Psoas muscle (tissue), 8 donors: ENCODE measurements at regions of chr10 and their contacts with region 1.

Region 1: DNA sequence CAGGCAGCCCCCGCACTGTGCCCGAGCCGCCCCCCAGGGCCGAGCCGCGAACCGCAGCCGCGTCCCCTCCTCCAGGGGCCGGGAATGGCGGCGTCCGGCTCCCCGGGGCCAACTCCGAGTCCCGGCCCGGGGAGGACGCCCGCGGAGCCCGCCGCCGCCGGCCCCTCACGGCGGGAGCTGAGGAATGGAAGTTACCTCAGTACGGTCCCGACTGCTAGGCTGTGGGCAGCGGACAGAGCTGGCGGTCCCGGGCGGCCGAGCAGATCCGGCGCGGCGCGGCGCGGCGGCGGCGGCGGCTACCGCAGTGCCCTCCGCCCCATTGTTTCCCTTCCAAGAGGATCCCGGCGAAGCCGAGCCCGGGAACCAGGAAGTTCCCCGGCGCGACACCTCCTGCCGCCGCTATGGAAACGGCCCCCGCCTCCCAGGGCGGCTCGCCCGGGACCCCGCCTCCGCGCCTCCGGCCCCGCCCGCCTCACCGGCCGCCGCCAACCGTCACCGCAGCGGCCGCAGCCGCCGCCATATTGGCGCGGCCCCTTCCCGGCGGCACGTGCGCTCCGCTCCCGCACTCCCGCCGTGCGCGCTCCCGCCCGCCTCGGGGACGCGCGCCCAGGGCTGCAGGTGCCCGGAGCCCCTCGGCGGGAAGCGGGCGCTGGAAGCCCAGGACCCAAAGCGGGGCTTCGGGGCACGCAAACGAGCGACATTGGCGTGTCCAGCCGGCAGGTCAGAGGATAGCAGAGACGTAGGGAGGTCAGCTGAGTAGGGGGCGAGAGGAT is at the start of gene USP6NL:
- DNase-seq: peak; percentile 89 to 92
- ATAC-seq: peak; percentile 97 to 98 (median 98)
- H3K4me3 ChIP-seq: peak within 1 kb of the TSS; percentile 87
- H3K27ac ChIP-seq: peak within 1 kb of the TSS; percentile 69
- H3K4me1 ChIP-seq: peaks cover 10% of the 10 kb centered on the region
- H3K27me3 ChIP-seq: no peaks in the 10 kb centered on the region
- CTCF ChIP-seq: no peak
- total RNA-seq, gene USP6NL: 2.8 to 5.4 (median 3.6) TPM

Region 2: GRCh38 chr10:11522821-11523245 is 88.6 kb before region 1 on chr10:
- intact Hi-C with region 1: loop called in 1 of 2 experiments (anchors 5 kb)
- DNase-seq: no peak
- ATAC-seq: no peak
- H3K4me3 ChIP-seq: no peak overlapping the region
- H3K27ac ChIP-seq: no peak overlapping the region
- H3K4me1 ChIP-seq: no peaks in the 10 kb centered on the region
- H3K27me3 ChIP-seq: no peaks in the 10 kb centered on the region
- CTCF ChIP-seq: no peak

Region 3: GRCh38 chr10:11684717-11685645 is 73.5 kb after region 1 on chr10:
- intact Hi-C with region 1: loop called in 1 of 2 experiments (anchors 5 kb)
- DNase-seq: peak; percentile 66 to 72
- ATAC-seq: peak; percentile 48 to 87 (median 76)
- H3K4me3 ChIP-seq: peak overlapping the region; percentile 24
- H3K27ac ChIP-seq: peak overlapping the region; percentile 74
- H3K4me1 ChIP-seq: no peaks in the 10 kb centered on the region
- H3K27me3 ChIP-seq: peaks cover 0 to 18% (median 8%) of the 10 kb centered on the region in 3 donors
- CTCF ChIP-seq: no peak

Region 4: DNA sequence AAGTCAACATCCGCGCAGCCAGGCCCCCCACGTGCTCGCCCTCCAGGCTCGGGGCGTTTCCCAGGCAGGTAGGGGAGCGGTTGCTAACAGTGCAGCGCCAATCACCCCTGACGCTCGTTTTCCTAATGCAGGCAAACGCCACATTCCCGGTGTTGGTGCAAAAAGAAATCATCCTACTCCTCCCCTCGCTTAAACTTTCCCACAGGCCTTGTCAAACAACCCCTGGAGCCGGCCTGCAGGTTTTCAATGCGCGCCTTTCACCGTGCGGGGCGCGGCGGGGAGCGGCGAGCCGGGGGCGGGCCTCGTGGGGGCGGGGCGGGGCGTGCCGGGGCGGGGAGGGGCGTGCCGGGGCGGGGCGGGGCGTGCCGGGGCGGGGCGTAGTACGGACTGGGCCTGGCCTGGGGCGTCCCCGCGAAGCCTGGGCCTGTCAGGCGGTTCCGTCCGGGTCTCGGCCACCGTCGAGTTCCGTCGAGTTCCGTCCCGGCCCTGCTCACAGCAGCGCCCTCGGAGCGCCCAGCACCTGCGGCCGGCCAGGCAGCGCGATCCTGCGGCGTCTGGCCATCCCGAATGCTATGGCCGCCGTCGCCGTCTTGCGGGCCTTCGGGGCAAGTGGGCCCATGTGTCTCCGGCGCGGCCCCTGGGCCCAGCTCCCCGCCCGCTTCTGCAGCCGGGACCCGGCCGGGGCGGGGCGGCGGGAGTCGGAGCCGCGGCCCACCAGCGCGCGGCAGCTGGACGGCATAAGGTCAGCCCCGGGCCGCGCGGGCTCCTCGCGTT is 130.8 kb after region 1 on chr10 and contains the start of gene ECHDC3:
- intact Hi-C with region 1: loop called (anchors 5 kb)
- DNase-seq: peak; percentile 73 to 90
- ATAC-seq: peak; percentile 71 to 86 (median 82)
- H3K4me3 ChIP-seq: peak within 1 kb of the TSS; percentile 77
- H3K27ac ChIP-seq: peak within 1 kb of the TSS; percentile 87
- H3K4me1 ChIP-seq: peaks cover 25% of the 10 kb centered on the region
- H3K27me3 ChIP-seq: peaks cover 0 to 4% (median 0%) of the 10 kb centered on the region in 3 donors
- CTCF ChIP-seq: no peak
- total RNA-seq, gene ECHDC3: 39.9 to 146 (median 84.6) TPM